CD4-positive, alpha-beta memory T cell (primary cell): ENCODE measurements at regions of chr16 and their contacts with region 1.

Region 1: GRCh38 chr16:19502395-19503131 is 19.3 kb downstream of the GDE1 start:
- DNase-seq: peak; percentile 46 to 62 (median 57)
- H3K4me3 ChIP-seq: no peak overlapping the region
- H3K4me3 Mint-ChIP-seq: no peak overlapping the region
- H3K27ac ChIP-seq: no peak overlapping the region
- H3K27ac Mint-ChIP-seq: peak overlapping the region in 1 of 7 donors; percentile 32
- H3K4me1 ChIP-seq: no peaks in the 10 kb centered on the region
- H3K4me1 Mint-ChIP-seq: no peaks in the 10 kb centered on the region
- H3K27me3 ChIP-seq: no peaks in the 10 kb centered on the region
- H3K27me3 Mint-ChIP-seq: no peaks in the 10 kb centered on the region

Region 2: GRCh38 chr16:19027416-19027815 is 475.1 kb before region 1 on chr16:
- CTCF ChIA-PET with region 1: no interaction called
- POLR2A ChIA-PET with region 1: no interaction called
- intact Hi-C with region 1: no loop called
- DNase-seq: no peak
- H3K4me3 ChIP-seq: no peak overlapping the region
- H3K4me3 Mint-ChIP-seq: no peak overlapping the region
- H3K27ac ChIP-seq: no peak overlapping the region
- H3K27ac Mint-ChIP-seq: no peak overlapping the region
- H3K4me1 ChIP-seq: no peaks in the 10 kb centered on the region
- H3K4me1 Mint-ChIP-seq: no peaks in the 10 kb centered on the region
- H3K27me3 ChIP-seq: no peaks in the 10 kb centered on the region
- H3K27me3 Mint-ChIP-seq: peaks cover 2% of the 10 kb centered on the region in 2 donors

Region 3: GRCh38 chr16:19323596-19323995 is 179.0 kb before region 1 on chr16:
- CTCF ChIA-PET with region 1: no interaction called
- POLR2A ChIA-PET with region 1: no interaction called
- intact Hi-C with region 1: no loop called
- DNase-seq: no peak
- H3K4me3 ChIP-seq: no peak overlapping the region
- H3K4me3 Mint-ChIP-seq: no peak overlapping the region
- H3K27ac ChIP-seq: no peak overlapping the region
- H3K27ac Mint-ChIP-seq: no peak overlapping the region
- H3K4me1 ChIP-seq: no peaks in the 10 kb centered on the region
- H3K4me1 Mint-ChIP-seq: no peaks in the 10 kb centered on the region
- H3K27me3 ChIP-seq: no peaks in the 10 kb centered on the region
- H3K27me3 Mint-ChIP-seq: no peaks in the 10 kb centered on the region

Region 4: GRCh38 chr16:19338335-19338734 is 164.2 kb before region 1 on chr16:
- CTCF ChIA-PET with region 1: no interaction called
- POLR2A ChIA-PET with region 1: no interaction called
- intact Hi-C with region 1: loop called (anchors 5 kb)
- DNase-seq: no peak
- H3K4me3 ChIP-seq: no peak overlapping the region
- H3K4me3 Mint-ChIP-seq: no peak overlapping the region
- H3K27ac ChIP-seq: no peak overlapping the region
- H3K27ac Mint-ChIP-seq: no peak overlapping the region
- H3K4me1 ChIP-seq: no peaks in the 10 kb centered on the region
- H3K4me1 Mint-ChIP-seq: no peaks in the 10 kb centered on the region
- H3K27me3 ChIP-seq: no peaks in the 10 kb centered on the region
- H3K27me3 Mint-ChIP-seq: peaks cover 1 to 6% of the 10 kb centered on the region in 2 donors

Region 5: DNA sequence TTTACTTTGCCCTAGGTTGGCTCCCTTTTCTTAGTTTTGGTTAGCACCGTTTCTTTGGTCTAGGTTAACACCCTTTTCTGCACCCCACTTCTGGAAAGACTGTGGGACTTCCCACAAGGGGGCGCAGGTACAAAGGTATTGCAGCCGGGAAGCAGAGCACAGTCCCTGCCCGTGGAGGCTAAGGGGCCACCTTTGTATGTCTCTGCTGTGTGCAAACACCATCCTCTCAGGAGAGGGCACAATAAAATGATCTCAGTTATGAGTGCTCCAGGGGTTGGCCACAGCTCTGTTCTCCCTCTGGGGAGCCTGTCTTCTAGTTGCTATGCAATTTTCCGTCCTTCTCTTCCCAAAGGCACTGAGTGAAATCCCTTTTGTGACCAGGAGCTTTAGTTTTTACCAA is 113.3 kb before region 1 on chr16:
- CTCF ChIA-PET with region 1: interaction called, 11 read pairs
- POLR2A ChIA-PET with region 1: no interaction called
- intact Hi-C with region 1: loop called (anchors 2 kb)
- DNase-seq: peak in 4 of 5 donors; percentile 26 to 45 (median 28)
- H3K4me3 ChIP-seq: no peak overlapping the region
- H3K4me3 Mint-ChIP-seq: no peak overlapping the region
- H3K27ac ChIP-seq: no peak overlapping the region
- H3K27ac Mint-ChIP-seq: no peak overlapping the region
- H3K4me1 ChIP-seq: no peaks in the 10 kb centered on the region
- H3K4me1 Mint-ChIP-seq: peaks cover 0 to 14% (median 9%) of the 10 kb centered on the region in 4 donors
- H3K27me3 ChIP-seq: no peaks in the 10 kb centered on the region
- H3K27me3 Mint-ChIP-seq: peaks cover 6 to 10% of the 10 kb centered on the region in 2 donors

Region 6: DNA sequence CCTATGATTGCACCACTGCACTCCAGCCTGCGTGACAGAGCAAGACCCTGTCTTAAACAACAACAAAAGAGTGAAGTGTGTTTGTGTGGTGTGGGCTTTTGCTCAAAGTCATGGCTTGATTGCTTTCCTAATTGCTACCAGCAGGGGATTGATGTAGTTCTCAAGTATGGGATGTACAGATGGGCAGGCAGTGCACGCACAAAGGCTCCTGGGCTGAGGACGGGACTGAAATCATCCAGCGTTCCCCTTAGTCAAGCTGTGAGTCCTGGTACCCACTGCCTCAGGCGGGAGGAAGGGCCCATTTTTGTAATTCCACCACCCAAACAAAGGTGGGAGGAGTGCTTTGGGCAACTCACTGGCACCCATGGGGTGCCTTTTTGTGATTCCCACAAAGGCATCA is 27.9 kb before region 1 on chr16:
- CTCF ChIA-PET with region 1: no interaction called
- POLR2A ChIA-PET with region 1: no interaction called
- intact Hi-C with region 1: no loop called
- DNase-seq: no peak
- H3K4me3 ChIP-seq: no peak overlapping the region
- H3K4me3 Mint-ChIP-seq: no peak overlapping the region
- H3K27ac ChIP-seq: no peak overlapping the region
- H3K27ac Mint-ChIP-seq: no peak overlapping the region
- H3K4me1 ChIP-seq: no peaks in the 10 kb centered on the region
- H3K4me1 Mint-ChIP-seq: no peaks in the 10 kb centered on the region
- H3K27me3 ChIP-seq: no peaks in the 10 kb centered on the region
- H3K27me3 Mint-ChIP-seq: peaks cover 4 to 6% of the 10 kb centered on the region in 2 donors